Esophagus muscularis mucosa (tissue), 4 donors: ENCODE measurements at regions of chr11 and their contacts with region 1.

Region 1: DNA sequence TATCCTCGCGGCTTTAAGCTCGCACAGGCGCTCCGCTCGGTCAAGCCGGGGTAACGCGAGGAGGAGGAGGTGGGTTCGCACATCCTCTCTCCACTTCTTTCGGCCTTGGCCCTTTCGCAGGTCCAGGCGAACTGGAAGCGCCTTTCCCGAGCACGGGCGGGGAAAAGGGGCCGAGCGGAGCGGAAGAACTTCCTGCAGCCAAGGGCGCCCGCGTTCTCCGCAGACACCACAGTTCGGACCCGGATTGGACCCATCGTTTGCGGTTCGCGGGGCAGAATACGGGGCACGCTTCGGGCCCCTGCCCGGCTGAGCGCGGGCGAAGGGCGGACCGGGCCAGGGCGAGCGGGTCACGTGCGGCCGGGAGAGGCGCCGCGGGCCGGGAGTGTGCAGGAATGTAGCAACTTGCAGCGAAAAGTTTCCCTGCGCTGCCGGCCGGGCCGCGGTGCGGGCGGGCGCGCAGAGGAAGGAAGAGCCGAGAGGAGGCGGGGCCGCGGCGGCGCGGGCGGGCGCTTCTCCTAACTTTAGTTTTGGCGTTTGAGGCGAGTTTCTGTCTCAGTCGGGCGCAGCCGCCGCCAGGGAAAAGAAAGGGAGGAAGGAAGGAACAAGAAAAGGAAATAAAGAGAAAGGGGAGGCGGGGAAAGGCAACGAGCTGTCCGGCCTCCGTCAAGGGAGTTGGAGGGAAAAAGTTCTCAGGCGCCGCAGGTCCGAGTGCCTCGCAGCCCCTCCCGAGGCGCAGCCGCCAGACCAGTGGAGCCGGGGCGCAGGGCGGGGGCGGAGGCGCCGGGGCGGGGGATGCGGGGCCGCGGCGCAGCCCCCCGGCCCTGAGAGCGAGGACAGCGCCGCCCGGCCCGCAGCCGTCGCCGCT is at the start of gene YAP1:
- DNase-seq: peak; percentile 95
- H3K4me3 ChIP-seq: peak within 1 kb of the TSS; percentile 65 to 95 (median 94)
- H3K27ac ChIP-seq: peak within 1 kb of the TSS; percentile 94 to 99 (median 98)
- H3K4me1 ChIP-seq: peaks cover 27 to 39% (median 38%) of the 10 kb centered on the region in 4 donors
- H3K27me3 ChIP-seq: no peaks in the 10 kb centered on the region
- CTCF ChIP-seq: peak in 1 of 3 experiments; percentile 26
- EP300 ChIP-seq: no peak
- POLR2A ChIP-seq: no peak
- total RNA-seq, gene YAP1: 220 to 343 (median 275) TPM

Region 2: DNA sequence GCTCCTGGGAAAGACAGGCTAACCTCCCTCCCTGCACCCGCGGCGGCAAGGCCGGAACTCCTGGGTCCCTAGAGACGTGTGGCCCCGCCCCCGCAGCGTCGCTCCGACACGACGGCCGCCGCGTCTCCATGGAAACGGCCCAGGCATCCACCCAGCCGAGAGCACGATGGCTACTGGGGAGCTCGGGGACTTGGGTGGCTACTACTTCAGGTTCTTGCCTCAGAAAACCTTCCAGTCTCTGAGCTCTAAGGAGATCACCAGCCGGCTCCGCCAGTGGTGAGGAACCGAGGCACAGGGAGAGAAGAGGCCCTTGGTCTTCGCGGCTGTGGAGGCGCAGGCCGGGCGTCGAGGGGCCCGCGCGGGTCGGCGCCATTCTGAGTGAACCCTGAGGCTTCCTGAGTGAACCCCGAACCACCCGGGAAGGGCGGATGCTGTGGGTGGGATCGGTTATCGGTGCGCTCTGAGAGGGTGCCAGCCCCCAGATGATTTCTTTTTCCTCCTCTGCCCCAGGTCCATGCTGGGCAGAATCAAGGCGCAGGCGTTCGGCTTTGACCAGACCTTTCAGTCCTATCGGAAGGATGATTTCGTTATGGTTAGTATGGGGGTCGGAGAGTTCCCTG is 62.7 kb before region 1 on chr11 and contains the start of gene CFAP300:
- intact Hi-C with region 1: loop called (anchors 5 kb)
- DNase-seq: peak; percentile 93
- H3K4me3 ChIP-seq: peak within 1 kb of the TSS; percentile 62 to 69 (median 64)
- H3K27ac ChIP-seq: peak within 1 kb of the TSS; percentile 71 to 82 (median 76)
- H3K4me1 ChIP-seq: peaks cover 0 to 16% (median 11%) of the 10 kb centered on the region in 4 donors
- H3K27me3 ChIP-seq: no peaks in the 10 kb centered on the region
- CTCF ChIP-seq: no peak
- EP300 ChIP-seq: no peak
- POLR2A ChIP-seq: no peak
- total RNA-seq, gene CFAP300: 0.83 to 2.2 (median 1.6) TPM

Region 3: DNA sequence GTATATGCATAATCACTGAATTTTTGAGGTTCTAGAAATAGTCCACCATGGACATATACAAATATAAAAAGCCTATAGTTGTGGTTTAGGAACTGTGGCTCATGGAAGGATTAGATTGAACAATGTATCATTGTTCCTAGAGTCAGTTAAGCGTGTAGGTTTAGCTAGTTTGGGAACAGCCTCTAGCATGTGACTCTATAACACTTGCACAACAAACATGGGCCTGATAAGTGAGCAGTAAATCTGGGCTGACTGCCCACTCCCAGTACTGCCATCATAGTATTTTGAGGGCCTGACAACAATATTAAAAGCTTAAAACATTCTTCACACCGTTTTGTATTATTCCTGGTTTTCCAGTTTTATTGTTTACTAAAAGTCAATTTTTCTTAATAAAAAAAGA is 47.1 kb after region 1 on chr11:
- intact Hi-C with region 1: no loop called
- DNase-seq: no peak
- H3K4me3 ChIP-seq: no peak overlapping the region
- H3K27ac ChIP-seq: no peak overlapping the region
- H3K4me1 ChIP-seq: peaks cover 39 to 80% (median 72%) of the 10 kb centered on the region in 4 donors
- H3K27me3 ChIP-seq: no peaks in the 10 kb centered on the region
- CTCF ChIP-seq: no peak
- EP300 ChIP-seq: no peak
- POLR2A ChIP-seq: no peak

Region 4: DNA sequence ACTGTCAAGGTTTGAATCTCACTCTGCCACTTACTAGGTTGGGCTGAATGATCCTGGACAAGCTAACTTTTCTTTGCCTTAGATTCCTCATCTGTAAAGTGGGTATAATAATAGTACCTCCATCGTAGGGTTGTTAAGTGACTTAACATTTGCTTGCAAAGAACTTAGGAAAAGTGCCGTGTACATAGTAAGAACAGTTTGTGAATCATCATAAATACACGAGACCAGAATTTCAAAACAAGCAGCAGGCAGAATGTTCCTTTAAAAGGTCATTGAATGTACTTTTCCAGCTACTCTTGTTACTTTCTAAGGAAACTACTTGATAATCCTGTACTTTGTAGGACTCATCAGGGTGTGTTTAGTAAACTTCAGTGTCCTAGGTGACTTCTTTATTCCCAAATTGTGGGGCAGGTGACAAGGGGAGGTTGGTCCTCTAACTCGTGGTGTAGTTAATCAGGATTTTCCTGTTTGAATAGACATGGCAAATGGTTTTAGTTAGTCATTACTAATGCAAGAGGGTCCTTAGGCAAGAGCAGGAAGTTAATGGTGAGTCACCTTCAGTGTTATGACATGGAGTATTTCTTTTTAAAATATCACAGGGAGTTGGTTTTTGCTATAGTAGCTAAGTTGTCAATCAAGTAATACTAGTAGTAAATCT is 68.0 kb after region 1 on chr11:
- intact Hi-C with region 1: loop called (anchors 10 kb)
- DNase-seq: no peak
- H3K4me3 ChIP-seq: no peak overlapping the region
- H3K27ac ChIP-seq: peak overlapping the region; percentile 67 to 83 (median 75)
- H3K4me1 ChIP-seq: peaks cover 5 to 31% (median 20%) of the 10 kb centered on the region in 4 donors
- H3K27me3 ChIP-seq: no peaks in the 10 kb centered on the region
- CTCF ChIP-seq: no peak
- EP300 ChIP-seq: no peak
- POLR2A ChIP-seq: no peak

Region 5: DNA sequence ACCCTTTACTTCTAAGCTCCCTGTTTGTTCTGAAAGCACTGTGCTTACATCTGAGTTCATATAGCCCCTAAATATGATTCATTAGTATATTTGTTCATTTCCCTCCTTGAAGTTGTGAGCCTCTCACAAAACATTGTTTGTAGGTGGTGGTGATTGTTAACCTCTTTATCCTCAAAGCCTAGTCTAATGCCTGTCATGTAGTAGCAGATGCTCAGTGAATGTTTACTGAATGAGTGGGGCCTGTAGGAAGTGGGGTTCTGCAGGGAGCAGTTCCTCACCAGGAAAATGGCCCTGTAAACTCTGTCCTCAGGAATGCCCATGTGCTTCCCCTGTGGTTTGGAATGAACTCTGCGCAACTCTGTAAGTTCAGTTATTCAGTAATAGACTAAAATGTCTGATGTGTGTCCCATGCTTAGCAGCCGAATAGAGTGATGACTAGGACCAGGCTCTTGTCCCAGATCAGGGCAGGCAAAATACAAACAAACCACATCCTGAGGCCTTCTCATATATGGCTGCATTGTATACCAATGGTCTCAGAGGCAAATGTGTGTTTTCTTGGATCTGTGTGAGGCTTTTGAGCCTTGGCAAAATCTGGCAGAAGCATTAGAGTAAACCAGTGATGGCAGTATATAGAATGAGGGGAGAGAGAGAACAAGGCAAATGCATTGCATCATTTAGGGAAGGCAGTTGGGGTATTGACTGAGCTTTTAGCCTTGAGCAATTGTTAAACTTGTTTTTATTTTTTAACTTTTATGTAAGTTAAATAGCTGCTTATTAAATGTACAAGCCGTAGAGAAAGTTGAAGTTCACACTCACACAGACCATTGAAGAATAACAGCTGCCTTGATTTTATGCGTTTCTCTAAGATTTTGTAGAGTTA is 115.8 kb after region 1 on chr11:
- intact Hi-C with region 1: loop called (anchors 10 kb)
- DNase-seq: no peak
- H3K4me3 ChIP-seq: no peak overlapping the region
- H3K27ac ChIP-seq: peak overlapping the region in 1 of 4 donors; percentile 35
- H3K4me1 ChIP-seq: peaks cover 0 to 42% (median 37%) of the 10 kb centered on the region in 4 donors
- H3K27me3 ChIP-seq: no peaks in the 10 kb centered on the region
- CTCF ChIP-seq: no peak
- EP300 ChIP-seq: no peak
- POLR2A ChIP-seq: no peak

Region 6: GRCh38 chr11:102268329-102269193 is 158.4 kb after region 1 on chr11:
- intact Hi-C with region 1: loop called (anchors 5 kb)
- DNase-seq: no peak
- H3K4me3 ChIP-seq: peak overlapping the region; percentile 47 to 58 (median 50)
- H3K27ac ChIP-seq: peak overlapping the region; percentile 40 to 46 (median 40)
- H3K4me1 ChIP-seq: peaks cover 6 to 16% (median 14%) of the 10 kb centered on the region in 4 donors
- H3K27me3 ChIP-seq: no peaks in the 10 kb centered on the region
- CTCF ChIP-seq: peak; percentile 51 to 69 (median 67)
- EP300 ChIP-seq: no peak
- POLR2A ChIP-seq: no peak